ENCODE measurements at regions of chr10 and their contacts with region 1.

Region 1: GRCh38 chr10:98309366-98310355 is 41.7 kb upstream of the LOXL4 start:
- DNase-seq: peak; percentile 50
- H3K4me3 ChIP-seq: no peak overlapping the region
- H3K27ac ChIP-seq: no peak overlapping the region
- H3K4me1 ChIP-seq: peaks cover 9% of the 10 kb centered on the region
- H3K27me3 ChIP-seq: no peaks in the 10 kb centered on the region
- CTCF ChIP-seq: peak; percentile 84 to 87

Region 2: GRCh38 chr10:97914837-97915211 is 394.8 kb before region 1 on chr10:
- CTCF ChIA-PET with region 1: no interaction called
- dilution Hi-C with region 1: no loop called
- in situ Hi-C with region 1: loop called in 1 of 2 experiments (anchors 25 kb)
- intact Hi-C with region 1: loop called (anchors 1 kb)
- DNase-seq: peak; percentile 48
- H3K4me3 ChIP-seq: no peak overlapping the region
- H3K27ac ChIP-seq: no peak overlapping the region
- H3K4me1 ChIP-seq: no peaks in the 10 kb centered on the region
- H3K27me3 ChIP-seq: peaks cover 7% of the 10 kb centered on the region
- CTCF ChIP-seq: peak; percentile 75 to 95

Region 3: GRCh38 chr10:98242823-98243222 is 66.8 kb before region 1 on chr10:
- CTCF ChIA-PET with region 1: no interaction called
- dilution Hi-C with region 1: loop called (anchors 5 kb)
- in situ Hi-C with region 1: no loop called
- intact Hi-C with region 1: loop called (anchors 1 kb)
- DNase-seq: no peak
- H3K4me3 ChIP-seq: no peak overlapping the region
- H3K27ac ChIP-seq: no peak overlapping the region
- H3K4me1 ChIP-seq: no peaks in the 10 kb centered on the region
- H3K27me3 ChIP-seq: no peaks in the 10 kb centered on the region
- CTCF ChIP-seq: peak; percentile 31 to 35

Region 4: GRCh38 chr10:98269072-98269912 is 40.4 kb before region 1 on chr10:
- CTCF ChIA-PET with region 1: no interaction called
- dilution Hi-C with region 1: no loop called
- in situ Hi-C with region 1: loop called in 1 of 2 experiments (anchors 5 kb)
- intact Hi-C with region 1: no loop called
- DNase-seq: peak; percentile 63
- H3K4me3 ChIP-seq: no peak overlapping the region
- H3K27ac ChIP-seq: no peak overlapping the region
- H3K4me1 ChIP-seq: peaks cover 18% of the 10 kb centered on the region
- H3K27me3 ChIP-seq: no peaks in the 10 kb centered on the region
- CTCF ChIP-seq: no peak

Region 5: GRCh38 chr10:98340261-98340939 is 30.7 kb after region 1 on chr10:
- CTCF ChIA-PET with region 1: no interaction called
- dilution Hi-C with region 1: no loop called
- in situ Hi-C with region 1: no loop called
- intact Hi-C with region 1: no loop called
- DNase-seq: no peak
- H3K4me3 ChIP-seq: no peak overlapping the region
- H3K27ac ChIP-seq: no peak overlapping the region
- H3K4me1 ChIP-seq: peaks cover 10% of the 10 kb centered on the region
- H3K27me3 ChIP-seq: no peaks in the 10 kb centered on the region
- CTCF ChIP-seq: no peak

Region 6: GRCh38 chr10:98394851-98395440 is 85.3 kb after region 1 on chr10:
- CTCF ChIA-PET with region 1: interaction called, 4 read pairs
- dilution Hi-C with region 1: no loop called
- in situ Hi-C with region 1: no loop called
- intact Hi-C with region 1: loop called (anchors 2 kb)
- DNase-seq: no peak
- H3K4me3 ChIP-seq: no peak overlapping the region
- H3K27ac ChIP-seq: no peak overlapping the region
- H3K4me1 ChIP-seq: peaks cover 13% of the 10 kb centered on the region
- H3K27me3 ChIP-seq: no peaks in the 10 kb centered on the region
- CTCF ChIP-seq: no peak